Activated CD4-positive, alpha-beta T cell treated with anti-CD3 and anti-CD28 coated beads, Interleukin-2, amount 10 ng/mL, durations not matched to agents 7 days and 5 days (primary cell): ENCODE measurements at regions of chr7 and their contacts with region 1.

Region 1: GRCh38 chr7:43582503-43583423 is at the start of gene STK17A:
- DNase-seq: peak; percentile 93
- H3K4me3 Mint-ChIP-seq: peak within 1 kb of the TSS; percentile 96
- H3K27ac Mint-ChIP-seq: peak within 1 kb of the TSS; percentile 99
- H3K4me1 Mint-ChIP-seq: peaks cover 31% of the 10 kb centered on the region
- H3K27me3 Mint-ChIP-seq: peaks cover 15% of the 10 kb centered on the region
- total RNA-seq, gene STK17A: 74.4 to 74.8 TPM

Region 2: DNA sequence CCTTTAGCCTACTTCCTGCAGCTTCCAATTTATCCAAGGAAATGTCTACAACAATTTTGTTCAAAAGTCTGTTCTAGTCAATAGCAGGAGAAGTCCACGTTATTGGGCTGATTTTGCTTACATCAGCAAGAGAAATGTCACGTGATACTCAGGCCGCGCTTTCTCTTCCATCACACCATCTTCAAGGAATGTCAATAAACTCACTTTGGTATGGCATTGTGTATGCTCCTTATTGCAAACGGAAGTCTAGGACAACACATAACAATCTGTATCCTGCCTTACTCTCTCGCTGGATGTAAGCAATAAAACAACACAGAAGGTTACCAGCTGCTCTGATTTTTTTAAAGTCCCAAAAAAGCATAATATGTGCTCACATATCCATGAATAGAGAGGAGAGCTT is 17.0 kb before region 1 on chr7:
- CTCF ChIA-PET with region 1: interaction called, 92 read pairs
- POLR2A ChIA-PET with region 1: no interaction called
- DNase-seq: no peak
- H3K4me3 Mint-ChIP-seq: no peak overlapping the region
- H3K27ac Mint-ChIP-seq: no peak overlapping the region
- H3K4me1 Mint-ChIP-seq: peaks cover 2% of the 10 kb centered on the region
- H3K27me3 Mint-ChIP-seq: peaks cover 23% of the 10 kb centered on the region

Region 3: GRCh38 chr7:43612599-43613589 is 30.1 kb after region 1 on chr7:
- CTCF ChIA-PET with region 1: interaction called, 27 read pairs
- POLR2A ChIA-PET with region 1: interaction called, 4 read pairs
- DNase-seq: no peak
- H3K4me3 Mint-ChIP-seq: no peak overlapping the region
- H3K27ac Mint-ChIP-seq: peak overlapping the region; percentile 55
- H3K4me1 Mint-ChIP-seq: peaks cover 58% of the 10 kb centered on the region
- H3K27me3 Mint-ChIP-seq: no peaks in the 10 kb centered on the region

Region 4: GRCh38 chr7:43669286-43670081 is 86.7 kb after region 1 on chr7:
- CTCF ChIA-PET with region 1: interaction called, 16 read pairs
- POLR2A ChIA-PET with region 1: interaction called, 5 read pairs
- DNase-seq: peak; percentile 33
- H3K4me3 Mint-ChIP-seq: peak overlapping the region; percentile 51
- H3K27ac Mint-ChIP-seq: peak overlapping the region; percentile 83
- H3K4me1 Mint-ChIP-seq: peaks cover 55% of the 10 kb centered on the region
- H3K27me3 Mint-ChIP-seq: no peaks in the 10 kb centered on the region

Region 5: DNA sequence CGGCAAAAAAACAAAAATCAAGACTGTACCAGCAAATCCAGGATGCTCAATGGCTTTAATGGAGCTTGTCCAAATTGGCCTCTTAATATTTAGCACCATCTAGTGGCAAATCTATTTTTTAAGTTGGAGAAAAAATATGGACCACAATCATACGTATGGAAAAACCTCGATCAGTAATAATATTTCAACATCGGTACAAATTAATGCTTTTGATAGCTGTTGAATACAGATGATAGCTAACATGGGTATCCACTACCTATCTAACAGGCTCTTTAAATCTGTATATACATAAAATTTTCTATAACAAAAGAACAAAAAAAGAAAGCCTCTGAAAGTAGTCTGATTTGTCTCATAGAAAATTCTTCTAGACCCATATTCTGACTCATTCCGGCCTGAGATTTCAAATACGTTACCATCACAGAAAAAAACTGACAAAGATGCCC is 117.3 kb after region 1 on chr7:
- CTCF ChIA-PET with region 1: interaction called, 177 read pairs
- POLR2A ChIA-PET with region 1: interaction called, 23 read pairs
- DNase-seq: no peak
- H3K4me3 Mint-ChIP-seq: no peak overlapping the region
- H3K27ac Mint-ChIP-seq: no peak overlapping the region
- H3K4me1 Mint-ChIP-seq: peaks cover 62% of the 10 kb centered on the region
- H3K27me3 Mint-ChIP-seq: no peaks in the 10 kb centered on the region

Region 6: GRCh38 chr7:43735802-43736541 is 153.2 kb after region 1 on chr7:
- CTCF ChIA-PET with region 1: interaction called, 31 read pairs
- POLR2A ChIA-PET with region 1: interaction called, 3 read pairs
- DNase-seq: no peak
- H3K4me3 Mint-ChIP-seq: no peak overlapping the region
- H3K27ac Mint-ChIP-seq: no peak overlapping the region
- H3K4me1 Mint-ChIP-seq: peaks cover 10% of the 10 kb centered on the region
- H3K27me3 Mint-ChIP-seq: peaks cover 4% of the 10 kb centered on the region